AG04450 (cell line): ENCODE measurements at regions of chr5 and their contacts with region 1.

Region 1: GRCh38 chr5:181243512-181244343 is at the start of gene RACK1:
- DNase-seq: peak; percentile 67
- H3K4me3 ChIP-seq: peak within 1 kb of the TSS; percentile 98
- H3K27ac ChIP-seq: peak within 1 kb of the TSS; percentile 94
- H3K27me3 ChIP-seq: no peaks in the 10 kb centered on the region
- CTCF ChIP-seq: no peak
- polyA plus RNA-seq, gene RACK1: 4,422 and 6,028 TPM in 2 replicates

Region 2: GRCh38 chr5:181260387-181261319 is 16.9 kb after region 1 on chr5 and contains the start of gene TRIM52:
- CTCF ChIA-PET with region 1: no interaction called
- POLR2A ChIA-PET with region 1: interaction called, 14 read pairs
- DNase-seq: no peak
- H3K4me3 ChIP-seq: peak within 1 kb of the TSS; percentile 92
- H3K27ac ChIP-seq: peak within 1 kb of the TSS; percentile 95
- H3K27me3 ChIP-seq: no peaks in the 10 kb centered on the region
- CTCF ChIP-seq: no peak
- polyA plus RNA-seq, gene TRIM52: 6.2 and 8.7 TPM in 2 replicates